Left cardiac atrium (tissue), 4 donors: ENCODE measurements at regions of chr22 and their contacts with region 1.

Region 1: DNA sequence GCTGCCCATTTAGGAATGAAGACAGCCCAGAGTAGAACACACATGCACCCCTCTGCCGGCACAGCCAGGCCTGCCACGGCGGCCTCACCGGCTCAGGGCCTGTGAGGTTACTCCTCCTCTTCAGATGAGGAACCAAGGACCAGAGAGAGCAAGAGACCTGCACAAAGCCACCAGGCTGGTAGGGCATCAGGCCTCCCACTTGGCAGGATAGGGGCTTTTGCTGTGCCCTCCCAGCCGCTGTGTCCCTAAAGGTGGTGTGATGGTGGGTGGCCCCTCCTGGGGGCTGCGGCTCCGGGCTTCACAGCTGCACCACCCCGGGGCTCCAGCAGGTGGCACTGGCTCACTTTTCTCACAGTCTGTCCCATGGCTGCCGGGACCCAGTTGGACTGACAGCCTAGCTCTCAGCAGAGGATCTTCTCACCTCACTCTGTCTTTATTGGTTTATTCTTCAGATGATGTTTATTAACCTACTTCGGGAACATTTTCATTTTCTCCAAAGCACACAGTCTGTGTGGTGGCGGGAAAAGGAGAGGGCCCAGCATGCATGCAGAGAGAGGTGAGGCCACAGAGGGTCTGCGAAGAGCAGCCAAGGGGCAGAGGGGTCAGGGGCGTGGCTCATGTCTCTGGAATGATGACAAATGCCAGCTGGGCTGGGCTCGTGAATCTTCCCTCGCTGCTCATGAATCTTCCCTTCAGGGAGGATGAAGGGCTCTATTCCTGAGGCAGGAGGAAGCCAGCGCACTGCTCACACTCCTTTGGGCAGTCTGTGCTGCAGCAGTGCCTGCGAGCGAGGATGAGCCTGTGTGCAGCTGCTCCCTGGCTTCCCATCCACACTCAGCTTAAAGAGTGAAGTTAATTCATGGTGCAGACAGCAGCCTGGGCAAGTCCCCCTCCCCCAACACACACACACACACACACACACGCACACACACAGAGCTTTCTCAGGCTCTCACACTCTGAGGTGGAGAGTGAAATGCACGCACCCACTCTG is 101.1 kb upstream of the PITPNB start:
- DNase-seq: peak; percentile 79
- ATAC-seq: peak; percentile 71

Region 2: GRCh38 chr22:28142361-28142961 is 122.3 kb after region 1 on chr22:
- intact Hi-C with region 1: no loop called
- DNase-seq: no peak
- ATAC-seq: peak; percentile 60 to 85

Region 3: DNA sequence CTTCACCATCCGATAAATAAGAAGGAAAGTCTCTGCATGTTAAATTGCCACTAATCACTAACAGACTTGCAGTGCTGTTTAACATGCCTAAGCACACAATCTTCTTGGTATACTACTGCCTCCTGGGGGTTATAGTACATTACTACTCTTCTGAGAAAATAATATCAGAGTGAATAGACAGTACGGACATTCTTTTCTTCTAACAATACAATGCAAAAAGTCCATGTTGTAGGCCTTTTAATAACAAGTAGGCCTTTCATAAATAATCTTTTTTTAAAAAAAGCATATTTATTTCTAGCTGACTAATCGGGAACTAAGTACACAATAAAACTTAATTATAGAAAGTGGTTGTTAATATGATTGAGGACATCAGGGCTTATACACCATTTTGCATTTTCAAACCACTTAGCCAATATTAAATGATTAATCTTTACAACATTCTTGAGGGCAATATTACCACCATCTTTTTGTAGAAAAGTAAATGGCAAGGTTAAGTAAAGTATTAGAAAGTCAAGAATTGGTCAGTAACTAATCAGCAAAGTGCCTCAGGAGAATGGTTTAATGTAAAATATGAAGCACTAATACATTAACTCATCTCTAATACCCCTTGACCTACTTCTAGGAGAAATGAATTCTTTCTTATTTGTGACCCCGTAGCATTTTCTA is 574.8 kb after region 1 on chr22:
- intact Hi-C with region 1: loop called (anchors 2 to 10 kb)
- DNase-seq: no peak
- ATAC-seq: peak; percentile 82 to 90

Region 4: GRCh38 chr22:28829358-28830181 is 809.4 kb after region 1 on chr22:
- intact Hi-C with region 1: loop called in 1 of 2 experiments (anchors 10 kb)
- DNase-seq: peak; percentile 78
- ATAC-seq: peak; percentile 90 to 92